ENCODE measurements at regions of chr1 and their contacts with region 1.

Region 1: GRCh38 chr1:39258146-39258924 is 53.8 kb downstream of the MACF1 start:
- DNase-seq: no peak
- H3K4me3 ChIP-seq: no peak overlapping the region
- H3K27ac ChIP-seq: no peak overlapping the region
- H3K27me3 ChIP-seq: no peaks in the 10 kb centered on the region
- CTCF ChIP-seq: peak; percentile 81

Region 2: GRCh38 chr1:39204441-39205081 is 53.8 kb before region 1 on chr1 and contains the start of gene MACF1:
- CTCF ChIA-PET with region 1: interaction called, 17 read pairs
- POLR2A ChIA-PET with region 1: interaction called, 4 read pairs
- DNase-seq: peak; percentile 85
- H3K4me3 ChIP-seq: peak within 1 kb of the TSS; percentile 74
- H3K27ac ChIP-seq: peak within 1 kb of the TSS; percentile 97
- H3K27me3 ChIP-seq: no peaks in the 10 kb centered on the region
- CTCF ChIP-seq: peak; percentile 66
- polyA plus RNA-seq, gene MACF1: 118 and 121 TPM in 2 replicates

Region 3: DNA sequence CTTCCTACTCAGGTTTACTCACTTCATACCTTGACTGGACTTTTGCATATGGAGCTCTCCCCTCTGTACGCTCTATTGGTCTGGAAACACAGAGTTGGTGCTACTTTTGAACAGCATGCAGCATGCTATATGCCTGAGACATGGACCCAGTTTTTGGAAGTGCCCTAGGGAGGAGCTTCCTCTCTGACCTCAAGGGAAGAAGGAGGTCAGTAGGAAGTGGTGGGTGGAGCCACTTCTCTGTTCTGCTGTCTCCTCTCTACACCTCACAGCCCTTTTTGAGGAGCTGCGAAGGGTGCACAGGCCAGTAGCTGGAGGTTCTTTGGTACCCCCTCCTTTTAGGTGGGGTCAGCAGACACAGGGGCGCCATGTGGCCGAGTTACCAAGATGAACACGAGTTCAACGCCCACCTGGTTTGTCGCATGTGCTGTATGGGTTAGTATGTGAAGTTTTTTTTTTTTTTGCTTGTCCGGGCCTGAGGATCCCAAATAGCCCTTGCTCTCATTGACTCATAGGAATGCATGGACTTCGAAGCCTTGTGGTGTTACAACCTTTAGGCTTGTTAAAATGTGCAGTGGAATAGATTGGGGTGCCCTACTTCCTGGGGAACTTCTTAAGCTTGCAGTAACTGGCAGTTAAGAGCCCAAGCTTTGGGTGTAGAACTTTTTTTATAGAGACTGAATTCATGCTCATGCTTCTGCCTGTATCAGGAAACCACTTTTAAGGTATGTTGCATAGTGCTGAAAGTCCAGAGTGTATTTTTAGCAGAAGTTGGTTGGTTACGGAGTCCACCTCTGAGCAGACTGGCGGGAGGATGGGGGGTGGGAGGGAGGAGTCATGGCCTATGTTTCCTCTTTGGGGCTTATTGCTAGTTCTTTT is 43.1 kb before region 1 on chr1:
- CTCF ChIA-PET with region 1: interaction called, 17 read pairs
- POLR2A ChIA-PET with region 1: no interaction called
- DNase-seq: no peak
- H3K4me3 ChIP-seq: no peak overlapping the region
- H3K27ac ChIP-seq: peak overlapping the region; percentile 13
- H3K27me3 ChIP-seq: no peaks in the 10 kb centered on the region
- CTCF ChIP-seq: no peak

Region 4: GRCh38 chr1:39238476-39238875 is 19.9 kb before region 1 on chr1:
- CTCF ChIA-PET with region 1: interaction called, 10 read pairs
- POLR2A ChIA-PET with region 1: no interaction called
- DNase-seq: peak; percentile 54
- H3K4me3 ChIP-seq: no peak overlapping the region
- H3K27ac ChIP-seq: peak overlapping the region; percentile 21
- H3K27me3 ChIP-seq: no peaks in the 10 kb centered on the region
- CTCF ChIP-seq: no peak

Region 5: DNA sequence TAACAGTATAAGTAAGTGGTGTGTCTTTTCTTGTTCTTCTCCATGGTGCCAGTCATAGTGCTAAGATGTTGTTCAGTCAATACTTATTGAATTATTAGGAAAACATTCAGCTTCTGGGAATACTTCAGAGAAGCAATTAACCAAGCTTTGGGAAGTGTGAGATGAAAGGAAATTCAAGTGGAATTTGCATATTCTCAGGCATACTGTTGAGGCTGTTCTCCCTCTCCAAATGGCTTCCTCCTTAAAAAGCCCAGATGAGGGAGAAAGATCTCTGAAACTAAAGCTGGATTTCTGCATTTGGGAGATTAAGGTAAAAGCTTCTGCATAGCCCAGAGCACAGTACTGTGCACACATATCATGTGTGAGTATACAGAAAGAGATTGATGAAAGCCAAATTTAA is 19.5 kb after region 1 on chr1:
- CTCF ChIA-PET with region 1: interaction called, 10 read pairs
- POLR2A ChIA-PET with region 1: no interaction called
- DNase-seq: no peak
- H3K4me3 ChIP-seq: no peak overlapping the region
- H3K27ac ChIP-seq: no peak overlapping the region
- H3K27me3 ChIP-seq: no peaks in the 10 kb centered on the region
- CTCF ChIP-seq: no peak

Measured in AG04450 (cell line).